ENCODE measurements at regions of chr5 and their contacts with region 1.

Region 1: GRCh38 chr5:140401362-140402257 is at the start of gene ANKHD1:
- DNase-seq: peak; percentile 99 to 100
- ATAC-seq: peak; percentile 89 to 92
- H3K4me3 ChIP-seq: peak within 1 kb of the TSS; percentile 80 to 100 (median 98)
- H3K27ac ChIP-seq: peak within 1 kb of the TSS; percentile 91 to 100 (median 98)
- H3K4me1 ChIP-seq: peaks cover 30 to 42% of the 10 kb centered on the region in 2 donors
- H3K27me3 ChIP-seq: no peaks in the 10 kb centered on the region
- CTCF ChIP-seq: no peak
- POLR2A ChIP-seq: peak; percentile 98 to 99
- total RNA-seq, gene ANKHD1: 51.3 to 93.6 (median 72.7) TPM

Region 2: GRCh38 chr5:140196115-140196814 is 205.3 kb before region 1 on chr5:
- in situ Hi-C with region 1: no loop called
- intact Hi-C with region 1: no loop called
- DNase-seq: no peak
- ATAC-seq: no peak
- H3K4me3 ChIP-seq: no peak overlapping the region
- H3K27ac ChIP-seq: peak overlapping the region; percentile 6 to 69 (median 31)
- H3K4me1 ChIP-seq: peaks cover 54 to 61% of the 10 kb centered on the region in 2 donors
- H3K27me3 ChIP-seq: no peaks in the 10 kb centered on the region
- CTCF ChIP-seq: no peak
- POLR2A ChIP-seq: no peak

Region 3: DNA sequence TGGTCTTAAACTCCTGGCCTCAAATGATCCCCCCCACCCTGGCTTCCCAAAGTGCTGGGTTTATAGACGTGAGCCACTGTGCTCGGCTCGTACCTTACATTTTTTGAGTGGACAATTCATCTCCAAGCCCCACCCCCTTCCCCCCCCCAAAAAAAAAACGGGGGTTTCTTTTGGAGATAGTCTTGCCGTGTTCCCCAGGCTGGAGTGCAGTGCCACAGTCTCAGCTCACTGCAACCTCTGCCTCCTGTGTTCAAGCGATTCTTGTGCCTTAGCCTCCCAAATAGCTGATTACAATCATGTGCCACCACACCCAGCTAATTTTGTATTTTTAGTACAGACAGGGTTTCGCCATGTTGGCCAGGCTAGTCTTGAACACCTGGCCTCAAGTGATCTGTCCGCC is 31.3 kb after region 1 on chr5:
- in situ Hi-C with region 1: no loop called
- intact Hi-C with region 1: no loop called
- DNase-seq: peak; percentile 4 to 18
- ATAC-seq: peak; percentile 46 to 62
- H3K4me3 ChIP-seq: no peak overlapping the region
- H3K27ac ChIP-seq: peak overlapping the region; percentile 33 to 70 (median 60)
- H3K4me1 ChIP-seq: peaks cover 5 to 24% of the 10 kb centered on the region in 2 donors
- H3K27me3 ChIP-seq: no peaks in the 10 kb centered on the region
- CTCF ChIP-seq: no peak
- POLR2A ChIP-seq: peak in 1 of 2 donors; percentile 10

Region 4: DNA sequence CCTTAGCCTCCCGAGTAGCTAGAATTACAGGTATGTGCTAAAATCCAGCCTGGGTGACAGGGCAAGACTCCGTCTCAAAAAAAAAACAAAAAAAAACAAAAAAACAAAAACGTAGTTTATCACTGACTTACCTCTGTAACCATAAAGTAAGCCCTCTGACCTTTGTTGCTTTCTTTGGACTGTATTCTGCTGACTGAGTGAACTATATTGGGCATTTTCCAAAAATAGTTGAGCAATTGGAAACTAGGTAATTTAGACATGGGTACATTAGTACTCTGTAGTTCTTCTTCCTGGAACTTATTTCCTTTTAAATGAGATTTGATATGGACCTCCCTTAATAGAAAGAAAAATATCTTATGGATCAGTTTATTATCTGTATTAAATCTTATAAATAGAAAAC is 66.6 kb after region 1 on chr5:
- in situ Hi-C with region 1: no loop called
- intact Hi-C with region 1: loop called (anchors 5 kb)
- DNase-seq: no peak
- ATAC-seq: peak; percentile 95 to 99
- H3K4me3 ChIP-seq: no peak overlapping the region
- H3K27ac ChIP-seq: peak overlapping the region; percentile 40 to 71 (median 59)
- H3K4me1 ChIP-seq: peaks cover 17 to 18% of the 10 kb centered on the region in 2 donors
- H3K27me3 ChIP-seq: no peaks in the 10 kb centered on the region
- CTCF ChIP-seq: no peak
- POLR2A ChIP-seq: no peak

Region 5: DNA sequence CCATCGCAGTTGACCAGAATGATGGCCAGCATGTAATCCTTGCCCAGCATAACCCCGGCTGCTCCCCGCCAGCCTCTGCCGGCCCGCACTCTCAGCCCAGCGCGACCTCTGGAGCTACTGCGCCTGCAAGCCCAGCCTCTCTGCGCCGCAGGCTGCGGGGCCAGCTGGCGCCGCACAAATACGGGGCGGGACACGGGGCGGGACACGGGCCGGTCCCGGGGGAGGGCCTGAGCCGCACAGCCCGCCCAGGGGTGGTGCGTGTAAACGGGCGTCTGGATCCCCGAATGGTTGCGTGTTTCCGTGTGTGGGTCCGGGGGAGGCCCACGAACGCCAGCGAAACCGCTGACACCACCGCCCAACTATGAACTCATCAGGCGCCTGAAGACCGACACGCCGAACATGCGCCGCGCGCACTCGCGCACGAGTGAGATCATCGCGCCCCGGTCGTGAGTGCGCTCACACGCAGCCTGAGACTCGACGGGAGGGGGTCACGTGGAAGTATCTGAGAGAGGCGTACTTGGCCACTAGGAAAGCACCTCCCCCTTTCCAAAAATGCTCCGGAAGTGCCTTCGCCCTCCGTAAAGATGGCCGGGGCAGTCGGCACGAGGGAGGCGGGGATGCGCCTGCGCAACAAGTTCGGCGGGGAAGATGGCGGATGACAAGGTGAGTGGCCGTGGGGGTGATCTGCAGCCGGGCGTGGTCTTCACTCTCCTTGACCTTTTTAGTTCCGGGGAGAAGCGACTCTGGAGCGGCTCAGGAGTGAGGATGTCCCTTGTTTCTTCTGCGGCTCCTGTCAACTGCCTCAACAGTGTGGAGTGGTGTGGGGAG is 162.8 kb after region 1 on chr5 and contains the starts of genes APBB3 and SLC35A4:
- in situ Hi-C with region 1: no loop called
- intact Hi-C with region 1: loop called (anchors 1 kb)
- DNase-seq: peak; percentile 98 to 99
- ATAC-seq: peak; percentile 85 to 92
- H3K4me3 ChIP-seq: peak within 1 kb of the TSS; percentile 77 to 92 (median 84)
- H3K27ac ChIP-seq: peak within 1 kb of the TSS; percentile 97 to 99 (median 98)
- H3K4me1 ChIP-seq: peaks cover 62% of the 10 kb centered on the region in 2 donors
- H3K27me3 ChIP-seq: no peaks in the 10 kb centered on the region
- CTCF ChIP-seq: no peak
- POLR2A ChIP-seq: peak; percentile 92
- total RNA-seq, gene APBB3: 4.1 to 12.5 (median 9.0) TPM
- total RNA-seq, gene SLC35A4: 71.7 to 152 (median 114) TPM

Region 6: GRCh38 chr5:140647042-140647341 is 245.4 kb after region 1 on chr5:
- in situ Hi-C with region 1: loop called in 2 of 4 experiments (anchors 10 to 25 kb)
- intact Hi-C with region 1: no loop called
- DNase-seq: no peak
- ATAC-seq: peak; percentile 6 to 27
- H3K4me3 ChIP-seq: peak overlapping the region; percentile 81 to 96 (median 90)
- H3K27ac ChIP-seq: peak overlapping the region; percentile 85 to 94 (median 92)
- H3K4me1 ChIP-seq: peaks cover 19 to 20% of the 10 kb centered on the region in 2 donors
- H3K27me3 ChIP-seq: no peaks in the 10 kb centered on the region
- CTCF ChIP-seq: no peak
- POLR2A ChIP-seq: no peak

Region 7: GRCh38 chr5:140690941-140691924 is 289.6 kb after region 1 on chr5 and contains the starts of genes HARS1 and HARS2:
- in situ Hi-C with region 1: no loop called
- intact Hi-C with region 1: loop called (anchors 2 kb)
- DNase-seq: peak; percentile 87 to 90
- ATAC-seq: peak; percentile 97 to 98
- H3K4me3 ChIP-seq: peak within 1 kb of the TSS; percentile 88 to 96 (median 90)
- H3K27ac ChIP-seq: peak within 1 kb of the TSS; percentile 85 to 93 (median 90)
- H3K4me1 ChIP-seq: peaks cover 18 to 40% of the 10 kb centered on the region in 2 donors
- H3K27me3 ChIP-seq: no peaks in the 10 kb centered on the region
- CTCF ChIP-seq: no peak
- POLR2A ChIP-seq: peak; percentile 38 to 78
- total RNA-seq, gene HARS1: 38.2 to 72.9 (median 59.4) TPM
- total RNA-seq, gene HARS2: 25.2 to 36.0 (median 27.0) TPM

Region 8: DNA sequence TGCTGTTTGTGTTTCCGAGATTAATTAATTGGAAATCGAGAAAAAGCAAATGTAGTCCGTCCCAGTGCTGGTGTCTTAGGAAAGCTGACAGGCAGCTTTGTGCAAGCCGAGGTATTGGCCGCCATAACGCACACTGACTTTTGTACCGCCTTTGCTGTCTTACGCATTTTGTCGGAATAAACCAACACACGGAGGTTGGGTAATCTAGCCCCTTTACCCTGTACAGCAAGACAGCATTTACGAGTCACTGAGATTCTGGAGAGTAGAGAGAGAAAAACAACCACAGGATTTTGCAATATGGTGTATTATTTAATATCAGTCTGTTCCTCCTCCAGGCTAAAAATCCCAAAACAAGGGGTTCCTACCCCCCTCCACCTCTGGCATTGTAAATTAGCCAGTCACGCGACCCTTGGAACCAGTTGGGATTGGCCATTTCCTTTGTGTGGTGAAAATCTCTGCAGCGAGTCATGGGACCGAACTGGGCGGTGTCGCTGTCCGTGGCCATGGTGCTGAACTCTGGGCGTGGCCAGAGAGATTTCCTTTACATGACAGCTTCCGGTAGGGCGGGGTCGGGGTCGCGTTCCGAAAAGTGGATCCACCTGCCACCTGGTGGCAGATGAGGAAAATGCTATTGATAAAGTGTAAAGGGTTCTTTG is 639.3 kb after region 1 on chr5:
- in situ Hi-C with region 1: loop called in 1 of 4 experiments (anchors 25 kb)
- intact Hi-C with region 1: no loop called
- DNase-seq: peak; percentile 50 to 76
- ATAC-seq: peak; percentile 68 to 90
- H3K4me3 ChIP-seq: peak overlapping the region; percentile 19 to 50 (median 37)
- H3K27ac ChIP-seq: no peak overlapping the region
- H3K4me1 ChIP-seq: peaks cover 6 to 7% of the 10 kb centered on the region in 2 donors
- H3K27me3 ChIP-seq: peaks cover 0 to 6% (median 2%) of the 10 kb centered on the region in 3 donors
- CTCF ChIP-seq: peak; percentile 34 to 61 (median 55)
- POLR2A ChIP-seq: peak in 1 of 2 donors; percentile 25

Measured in gastrocnemius medialis (tissue), 4 donors.